ENCODE measurements at regions of chr7 and their contacts with region 1.

Region 1: GRCh38 chr7:36192053-36192824 is 39.2 kb downstream of the EEPD1 start:
- DNase-seq: peak; percentile 11
- ATAC-seq: peak; percentile 71
- H3K4me3 ChIP-seq: peak overlapping the region; percentile 36; the same call in 1 of the 2 replicates
- H3K27ac ChIP-seq: no peak overlapping the region
- H3K4me1 ChIP-seq: no peaks in the 10 kb centered on the region
- H3K27me3 ChIP-seq: no peaks in the 10 kb centered on the region
- CTCF ChIP-seq: no peak
- EP300 ChIP-seq: peak; percentile 73 to 89
- POLR2A ChIP-seq: no peak
- RAD21 ChIP-seq: no peak

Region 2: DNA sequence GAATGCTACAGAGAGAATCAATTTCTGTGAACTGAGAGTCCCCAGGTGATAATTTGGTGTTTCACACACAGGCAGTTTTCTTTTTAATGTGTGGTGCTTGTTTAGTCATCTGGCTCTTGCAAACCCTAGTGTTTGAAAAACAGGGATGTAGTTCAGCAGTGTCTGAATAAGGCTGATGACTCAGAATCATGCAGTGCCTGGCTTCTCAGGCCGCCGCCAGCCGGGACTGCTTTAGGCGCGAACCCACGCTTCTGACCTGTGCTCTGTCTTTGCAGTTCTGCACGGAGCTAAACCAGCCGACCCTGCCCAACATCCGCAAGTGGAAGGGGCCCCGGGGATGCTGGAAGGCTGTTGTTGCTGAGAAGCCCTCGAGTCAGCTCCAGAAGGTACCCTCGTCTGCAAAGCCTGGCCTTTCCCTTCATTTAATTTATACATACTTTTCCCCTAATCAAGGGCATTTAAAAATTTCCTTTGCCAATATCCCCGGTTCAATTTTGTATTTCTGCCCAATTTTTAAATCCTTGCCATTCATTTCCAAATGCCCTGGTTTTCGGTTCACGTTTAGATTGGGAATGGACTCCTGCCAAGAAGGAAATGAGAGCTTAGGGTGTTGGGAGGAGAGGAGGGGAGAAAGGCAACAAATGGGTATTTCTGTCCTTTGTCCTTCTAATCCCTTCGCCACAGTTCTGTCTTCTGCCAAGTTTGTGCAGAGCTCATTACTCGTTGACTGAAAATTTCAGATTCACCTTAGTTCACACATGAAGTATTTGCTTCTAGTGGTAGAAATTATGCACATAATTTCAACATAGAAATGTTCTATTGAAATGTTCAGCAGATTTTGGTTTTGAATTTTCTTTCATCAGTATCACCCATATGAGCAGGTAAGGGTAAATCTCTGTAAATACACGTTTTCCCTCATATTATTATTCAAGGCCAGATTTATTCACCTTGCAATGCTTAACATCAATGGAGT is 88.9 kb after region 1 on chr7:
- CTCF ChIA-PET with region 1: interaction called, 3 read pairs
- POLR2A ChIA-PET with region 1: interaction called, 4 read pairs
- RAD21 ChIA-PET with region 1: interaction called, 10 read pairs
- SMC1A ChIA-PET with region 1: interaction called, 11 read pairs
- in situ Hi-C with region 1: no loop called
- intact Hi-C with region 1: no loop called
- DNase-seq: no peak
- ATAC-seq: peak; percentile 48
- H3K4me3 ChIP-seq: no peak overlapping the region
- H3K27ac ChIP-seq: no peak overlapping the region
- H3K4me1 ChIP-seq: peaks cover 16% of the 10 kb centered on the region
- H3K27me3 ChIP-seq: no peaks in the 10 kb centered on the region; a peak in 1 of 4 replicates
- CTCF ChIP-seq: no peak
- EP300 ChIP-seq: no peak
- POLR2A ChIP-seq: no peak
- RAD21 ChIP-seq: no peak

Region 3: DNA sequence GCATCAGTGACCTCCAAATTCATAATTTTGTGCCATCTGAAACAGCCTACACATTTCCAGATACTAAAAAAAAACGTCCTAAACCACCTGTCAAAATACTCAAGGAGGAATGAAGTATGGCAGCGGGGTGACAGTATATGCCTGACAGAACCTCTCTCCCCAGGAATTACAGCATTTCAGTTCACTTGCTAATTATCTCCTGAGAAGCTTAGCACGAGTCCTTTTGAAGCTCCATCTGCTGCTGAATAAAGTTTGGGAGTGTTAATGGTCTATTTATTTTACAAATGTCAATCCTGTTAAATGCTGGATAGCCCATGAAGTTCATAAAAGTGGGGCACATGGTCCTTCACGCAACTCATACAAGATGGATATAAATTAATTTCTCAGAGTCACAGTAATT is 168.0 kb after region 1 on chr7:
- CTCF ChIA-PET with region 1: no interaction called
- POLR2A ChIA-PET with region 1: no interaction called
- RAD21 ChIA-PET with region 1: no interaction called
- SMC1A ChIA-PET with region 1: no interaction called
- in situ Hi-C with region 1: no loop called
- intact Hi-C with region 1: no loop called
- DNase-seq: no peak
- ATAC-seq: no peak
- H3K4me3 ChIP-seq: no peak overlapping the region
- H3K27ac ChIP-seq: no peak overlapping the region
- H3K4me1 ChIP-seq: no peaks in the 10 kb centered on the region
- H3K27me3 ChIP-seq: no peaks in the 10 kb centered on the region; a peak in 2 of 4 replicates
- CTCF ChIP-seq: no peak
- EP300 ChIP-seq: no peak
- POLR2A ChIP-seq: no peak
- RAD21 ChIP-seq: no peak

Region 4: DNA sequence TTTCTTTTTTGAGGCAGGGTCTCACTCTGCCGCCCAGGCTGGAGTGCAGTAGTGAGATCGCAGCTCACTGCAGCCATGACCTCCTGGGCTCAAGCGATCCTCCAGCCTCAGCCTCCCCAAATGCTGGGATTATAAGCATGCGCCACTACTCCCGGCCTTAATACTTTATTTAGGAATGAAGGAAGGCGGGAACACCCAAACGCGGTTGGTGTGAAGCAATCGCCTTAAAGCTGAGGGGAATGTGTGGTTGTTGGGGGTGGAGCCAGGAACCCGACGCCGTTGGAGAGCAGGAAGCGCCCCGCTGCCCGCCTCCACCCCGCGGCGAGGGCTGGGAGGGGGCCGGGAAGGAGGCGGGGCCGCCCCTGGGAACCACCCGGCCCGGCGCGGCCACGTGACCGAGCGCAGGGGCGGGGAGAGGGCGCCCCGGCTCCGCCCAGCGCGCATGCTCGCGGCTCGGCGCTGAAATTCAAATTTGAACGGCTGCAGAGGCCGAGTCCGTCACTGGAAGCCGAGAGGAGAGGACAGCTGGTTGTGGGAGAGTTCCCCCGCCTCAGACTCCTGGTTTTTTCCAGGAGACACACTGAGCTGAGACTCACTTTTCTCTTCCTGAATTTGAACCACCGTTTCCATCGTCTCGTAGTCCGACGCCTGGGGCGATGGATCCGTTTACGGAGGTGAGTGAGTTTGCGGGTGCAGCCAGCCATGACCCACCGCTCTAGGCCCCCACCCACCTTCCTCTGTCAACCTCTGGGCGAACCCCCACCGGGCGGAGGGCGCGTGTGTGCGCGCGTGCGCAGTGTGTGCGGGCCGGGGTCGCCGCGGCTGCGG is 197.3 kb after region 1 on chr7 and contains the start of gene ANLN:
- CTCF ChIA-PET with region 1: no interaction called
- POLR2A ChIA-PET with region 1: no interaction called
- RAD21 ChIA-PET with region 1: no interaction called
- SMC1A ChIA-PET with region 1: no interaction called
- in situ Hi-C with region 1: no loop called
- intact Hi-C with region 1: no loop called
- DNase-seq: peak; percentile 28
- ATAC-seq: peak; percentile 90
- H3K4me3 ChIP-seq: peak within 1 kb of the TSS; percentile 93
- H3K27ac ChIP-seq: peak within 1 kb of the TSS; percentile 62
- H3K4me1 ChIP-seq: no peaks in the 10 kb centered on the region
- H3K27me3 ChIP-seq: no peaks in the 10 kb centered on the region
- CTCF ChIP-seq: no peak
- EP300 ChIP-seq: no peak
- POLR2A ChIP-seq: peak; percentile 77
- RAD21 ChIP-seq: no peak
- polyA plus RNA-seq, gene ANLN: 9.5 to 10.6 TPM

Measured in GM12878 (cell line).